Endothelial cell of umbilical vein (primary cell): ENCODE measurements at regions of chr2 and their contacts with region 1.

Region 1: DNA sequence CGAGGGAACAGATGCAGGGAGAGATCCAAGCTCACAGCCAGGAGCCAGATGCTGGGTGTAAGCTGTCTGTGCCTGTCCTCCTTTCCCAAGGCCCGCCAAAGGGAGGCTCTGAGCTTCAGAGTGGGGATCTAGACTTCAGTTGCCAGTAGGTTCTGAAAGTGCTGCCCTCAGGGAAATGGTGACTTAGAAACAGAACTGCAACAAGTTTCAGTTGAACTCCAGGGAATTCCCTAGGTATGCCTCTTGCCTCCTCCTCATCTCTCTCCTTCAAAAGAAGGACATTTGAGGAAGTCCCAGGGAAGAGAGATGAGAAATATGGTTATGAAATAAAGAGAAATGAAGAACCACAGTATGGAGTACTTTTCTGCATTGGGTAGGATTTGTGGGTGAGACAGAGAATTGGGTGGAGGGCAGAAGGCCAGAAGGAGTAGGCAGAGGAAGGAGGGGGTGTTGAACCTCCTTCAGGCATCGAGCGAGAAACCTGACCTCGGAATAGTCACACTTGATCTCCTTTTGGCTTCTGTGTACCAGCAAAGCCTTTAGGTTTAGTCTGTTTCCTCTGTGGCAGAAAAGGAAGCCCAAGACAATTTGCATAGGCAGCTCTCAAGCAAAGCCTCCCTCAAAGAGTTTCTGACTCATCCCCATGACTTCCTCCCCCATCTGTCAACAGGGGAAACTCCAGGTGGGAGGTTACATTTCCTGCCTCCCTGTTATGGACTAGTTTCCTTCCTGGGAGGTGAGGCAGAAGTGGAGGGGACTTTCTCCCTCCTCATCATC is 45.7 kb downstream of the QPCT start:
- DNase-seq: peak; percentile 88
- H3K4me3 ChIP-seq: no peak overlapping the region
- H3K27ac ChIP-seq: peak overlapping the region; percentile 78
- H3K4me1 ChIP-seq: peaks cover 28% of the 10 kb centered on the region
- H3K27me3 ChIP-seq: no peaks in the 10 kb centered on the region
- CTCF ChIP-seq: no peak
- POLR2A ChIP-seq: peak; percentile 82

Region 2: GRCh38 chr2:36835125-36835524 is 555.1 kb before region 1 on chr2:
- CTCF ChIA-PET with region 1: no interaction called
- POLR2A ChIA-PET with region 1: no interaction called
- dilution Hi-C with region 1: no loop called
- intact Hi-C with region 1: no loop called
- DNase-seq: peak; percentile 31
- H3K4me3 ChIP-seq: no peak overlapping the region
- H3K27ac ChIP-seq: peak overlapping the region; percentile 17
- H3K4me1 ChIP-seq: peaks cover 11% of the 10 kb centered on the region
- H3K27me3 ChIP-seq: no peaks in the 10 kb centered on the region
- CTCF ChIP-seq: no peak
- POLR2A ChIP-seq: no peak

Region 3: GRCh38 chr2:37344453-37345361 is 45.5 kb before region 1 on chr2 and contains the start of gene QPCT:
- CTCF ChIA-PET with region 1: interaction called, 15 read pairs
- POLR2A ChIA-PET with region 1: no interaction called
- dilution Hi-C with region 1: no loop called
- intact Hi-C with region 1: loop called (anchors 1 kb)
- DNase-seq: peak; percentile 39
- H3K4me3 ChIP-seq: peak within 1 kb of the TSS; percentile 9 to 54 (median 53)
- H3K27ac ChIP-seq: peak within 1 kb of the TSS; percentile 46
- H3K4me1 ChIP-seq: peaks cover 17% of the 10 kb centered on the region
- H3K27me3 ChIP-seq: no peaks in the 10 kb centered on the region
- CTCF ChIP-seq: no peak
- POLR2A ChIP-seq: no peak
- total RNA-seq, gene QPCT: 12.8 and 14.3 TPM in 2 replicates

Region 4: GRCh38 chr2:37402636-37403035 is 12.5 kb after region 1 on chr2:
- CTCF ChIA-PET with region 1: interaction called, 23 read pairs
- POLR2A ChIA-PET with region 1: no interaction called
- dilution Hi-C with region 1: no loop called
- intact Hi-C with region 1: no loop called
- DNase-seq: no peak
- H3K4me3 ChIP-seq: no peak overlapping the region
- H3K27ac ChIP-seq: no peak overlapping the region
- H3K4me1 ChIP-seq: no peaks in the 10 kb centered on the region
- H3K27me3 ChIP-seq: no peaks in the 10 kb centered on the region
- CTCF ChIP-seq: no peak
- POLR2A ChIP-seq: no peak

Region 5: GRCh38 chr2:37871456-37872191 is 481.4 kb after region 1 on chr2:
- CTCF ChIA-PET with region 1: interaction called, 399 read pairs
- POLR2A ChIA-PET with region 1: no interaction called
- dilution Hi-C with region 1: no loop called
- intact Hi-C with region 1: no loop called
- DNase-seq: peak; percentile 32
- H3K4me3 ChIP-seq: no peak overlapping the region
- H3K27ac ChIP-seq: no peak overlapping the region
- H3K4me1 ChIP-seq: peaks cover 9% of the 10 kb centered on the region
- H3K27me3 ChIP-seq: no peaks in the 10 kb centered on the region
- CTCF ChIP-seq: no peak
- POLR2A ChIP-seq: no peak

Region 6: GRCh38 chr2:38115216-38116032 is 725.2 kb after region 1 on chr2:
- CTCF ChIA-PET with region 1: interaction called, 13 read pairs
- POLR2A ChIA-PET with region 1: no interaction called
- dilution Hi-C with region 1: no loop called
- intact Hi-C with region 1: no loop called
- DNase-seq: peak; percentile 73
- H3K4me3 ChIP-seq: no peak overlapping the region
- H3K27ac ChIP-seq: no peak overlapping the region
- H3K4me1 ChIP-seq: no peaks in the 10 kb centered on the region
- H3K27me3 ChIP-seq: peaks cover 0 to 10% of the 10 kb centered on the region in 2 experiments
- CTCF ChIP-seq: peak; percentile 91 to 98
- POLR2A ChIP-seq: no peak